ENCODE measurements at regions of chr4 and their contacts with region 1.

Region 1: DNA sequence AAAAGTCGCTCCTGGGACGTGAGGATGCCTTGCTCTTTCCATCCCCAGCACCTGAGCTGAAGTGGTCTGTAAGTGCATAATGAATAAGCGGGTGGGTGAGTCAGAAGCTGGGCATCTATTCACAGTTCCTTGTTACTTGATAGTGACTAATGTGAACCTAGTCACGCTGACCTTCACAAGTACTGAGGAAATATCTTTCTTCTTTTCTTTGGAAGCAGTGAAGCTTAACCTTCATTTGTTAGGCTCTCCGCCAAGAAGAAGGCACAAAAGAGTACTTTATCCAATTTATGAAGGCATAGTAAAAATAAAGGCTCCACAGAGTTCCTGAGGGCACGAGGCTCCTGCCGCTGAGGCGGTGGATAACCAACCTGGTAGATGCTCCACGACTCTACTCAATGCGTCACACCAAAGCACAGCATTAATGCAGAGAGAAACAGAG is 475.7 kb upstream of the SLIT2 start:
- DNase-seq: peak; percentile 29
- H3K4me3 ChIP-seq: no peak overlapping the region
- H3K27me3 ChIP-seq: no peaks in the 10 kb centered on the region
- CTCF ChIP-seq: no peak

Region 2: DNA sequence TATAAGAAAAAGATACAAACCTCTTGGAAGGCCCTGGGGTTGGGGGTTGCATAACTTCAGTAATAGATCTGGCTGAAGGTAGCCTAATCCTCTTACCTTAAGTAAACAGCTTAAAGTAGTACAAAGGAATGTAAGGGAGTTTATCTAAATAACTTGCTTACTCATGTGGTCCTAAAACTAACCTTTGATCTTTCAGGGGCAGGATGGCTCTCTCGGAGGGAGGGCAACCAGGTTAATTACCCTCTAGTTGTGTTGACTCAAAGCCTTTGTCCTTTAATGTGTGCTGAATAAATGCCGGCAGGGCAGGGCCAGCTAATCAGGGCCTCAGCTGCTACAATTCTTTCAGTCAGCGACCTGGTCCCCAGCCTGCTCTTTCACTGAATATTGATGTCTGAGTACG is 346.4 kb before region 1 on chr4:
- CTCF ChIA-PET with region 1: no interaction called
- POLR2A ChIA-PET with region 1: interaction called, 13 read pairs
- DNase-seq: no peak
- H3K4me3 ChIP-seq: no peak overlapping the region
- H3K27me3 ChIP-seq: no peaks in the 10 kb centered on the region
- CTCF ChIP-seq: no peak